Heart right ventricle (tissue), 16 donors: ENCODE measurements at regions of chr4 and their contacts with region 1.

Region 1: GRCh38 chr4:113328514-113328913 is 279.1 kb downstream of the ANK2 start:
- DNase-seq: no peak
- ATAC-seq: peak in 1 of 8 donors; percentile 53
- H3K4me3 ChIP-seq: no peak overlapping the region
- H3K27ac ChIP-seq: no peak overlapping the region
- H3K4me1 ChIP-seq: peaks cover 0 to 3% (median 0%) of the 10 kb centered on the region in 9 donors
- H3K27me3 ChIP-seq: no peaks in the 10 kb centered on the region
- CTCF ChIP-seq: peak in 7 of 9 donors; percentile 35 to 46 (median 43)

Region 2: GRCh38 chr4:113183032-113183605 is 145.4 kb before region 1 on chr4:
- intact Hi-C with region 1: no loop called
- DNase-seq: no peak
- ATAC-seq: peak in 2 of 8 donors; percentile 28 to 33
- H3K4me3 ChIP-seq: no peak overlapping the region
- H3K27ac ChIP-seq: no peak overlapping the region
- H3K4me1 ChIP-seq: peaks cover 7 to 64% (median 39%) of the 10 kb centered on the region in 9 donors
- H3K27me3 ChIP-seq: no peaks in the 10 kb centered on the region
- CTCF ChIP-seq: no peak

Region 3: DNA sequence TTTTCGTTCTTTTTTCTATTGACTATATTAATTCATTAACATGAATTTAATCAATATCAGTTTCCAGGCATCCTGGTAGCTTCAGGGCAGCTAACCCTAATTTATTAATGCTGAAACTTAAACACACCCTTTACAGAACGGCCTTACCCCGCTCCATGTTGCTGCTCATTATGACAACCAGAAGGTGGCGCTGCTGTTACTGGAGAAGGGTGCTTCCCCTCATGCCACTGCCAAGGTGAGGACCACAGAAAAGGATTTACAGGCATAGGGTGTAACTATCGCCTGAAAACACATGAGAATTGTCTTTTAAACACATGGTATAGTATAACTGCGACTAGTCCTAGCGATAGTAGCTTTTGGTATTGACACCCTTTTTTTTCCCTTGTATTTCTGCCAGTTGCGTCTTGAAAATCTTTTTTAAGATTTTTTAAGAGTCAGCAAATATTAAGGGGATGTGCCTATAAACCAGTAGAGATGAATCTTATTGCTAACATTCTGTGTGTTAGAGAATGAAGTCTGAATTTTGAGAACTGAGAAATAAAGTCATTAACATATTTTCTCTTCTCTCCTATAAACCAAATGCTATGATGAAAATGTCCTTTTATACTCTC is 50.1 kb before region 1 on chr4:
- intact Hi-C with region 1: loop called in 1 of 10 experiments (anchors 5 kb)
- DNase-seq: peak; percentile 34 to 81
- ATAC-seq: peak; percentile 80 to 91 (median 86)
- H3K4me3 ChIP-seq: no peak overlapping the region
- H3K27ac ChIP-seq: no peak overlapping the region
- H3K4me1 ChIP-seq: peaks cover 0 to 24% (median 6%) of the 10 kb centered on the region in 9 donors
- H3K27me3 ChIP-seq: no peaks in the 10 kb centered on the region
- CTCF ChIP-seq: peak; percentile 56 to 90 (median 84)